Naive thymus-derived CD4-positive, alpha-beta T cell (primary cell): ENCODE measurements at regions of chr12 and their contacts with region 1.

Region 1: DNA sequence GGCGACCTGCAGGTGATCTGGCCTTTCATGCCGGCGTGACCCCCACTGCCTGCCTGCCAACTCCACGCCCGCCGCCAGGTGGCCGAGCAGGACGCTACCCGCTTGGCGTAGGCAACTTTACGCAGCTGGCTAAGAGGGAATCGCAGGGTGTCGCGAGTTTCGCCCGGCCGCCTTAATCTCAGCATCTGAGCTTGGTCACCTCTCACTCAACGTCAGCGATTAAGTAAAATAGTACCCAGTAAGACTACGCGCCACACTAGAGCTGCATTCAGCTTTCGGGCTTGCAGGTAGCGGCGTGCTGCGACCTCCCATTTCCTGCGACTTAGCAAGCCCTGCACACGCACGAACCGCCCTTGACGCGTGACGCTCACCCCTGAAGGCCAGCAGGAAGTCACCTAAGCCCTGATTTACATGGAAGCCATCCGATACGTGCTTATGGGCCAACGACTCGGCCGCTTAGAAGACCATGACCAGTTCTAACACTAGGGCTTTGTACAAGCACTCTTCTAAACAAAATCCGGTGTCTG is 33.2 kb downstream of the WBP11 start:
- DNase-seq: peak; percentile 79 to 89 (median 87)
- ATAC-seq: peak; percentile 66
- H3K4me3 ChIP-seq: peak overlapping the region; percentile 89
- H3K4me3 Mint-ChIP-seq: peak overlapping the region; percentile 91 to 100 (median 98)
- H3K27ac ChIP-seq: peak overlapping the region; percentile 96
- H3K27ac Mint-ChIP-seq: peak overlapping the region; percentile 98 to 100 (median 100)
- H3K4me1 ChIP-seq: peaks cover 11 to 28% of the 10 kb centered on the region in 2 donors
- H3K4me1 Mint-ChIP-seq: peaks cover 29 to 76% (median 57%) of the 10 kb centered on the region in 7 donors
- H3K27me3 ChIP-seq: no peaks in the 10 kb centered on the region
- H3K27me3 Mint-ChIP-seq: peaks cover 0 to 6% (median 0%) of the 10 kb centered on the region in 5 donors

Region 2: GRCh38 chr12:14239350-14239934 is 530.6 kb before region 1 on chr12:
- CTCF ChIA-PET with region 1: no interaction called
- POLR2A ChIA-PET with region 1: interaction called, 9 read pairs
- intact Hi-C with region 1: loop called in 1 of 2 experiments (anchors 2 kb)
- DNase-seq: peak in 2 of 9 donors; percentile 12 to 40
- ATAC-seq: peak; percentile 69
- H3K4me3 ChIP-seq: peak overlapping the region; percentile 52
- H3K4me3 Mint-ChIP-seq: peak overlapping the region; percentile 75 to 90 (median 82)
- H3K27ac ChIP-seq: peak overlapping the region; percentile 1
- H3K27ac Mint-ChIP-seq: peak overlapping the region; percentile 37 to 93 (median 87)
- H3K4me1 ChIP-seq: peaks cover 0 to 6% of the 10 kb centered on the region in 2 donors
- H3K4me1 Mint-ChIP-seq: peaks cover 17 to 29% (median 22%) of the 10 kb centered on the region in 7 donors
- H3K27me3 ChIP-seq: no peaks in the 10 kb centered on the region
- H3K27me3 Mint-ChIP-seq: no peaks in the 10 kb centered on the region

Region 3: DNA sequence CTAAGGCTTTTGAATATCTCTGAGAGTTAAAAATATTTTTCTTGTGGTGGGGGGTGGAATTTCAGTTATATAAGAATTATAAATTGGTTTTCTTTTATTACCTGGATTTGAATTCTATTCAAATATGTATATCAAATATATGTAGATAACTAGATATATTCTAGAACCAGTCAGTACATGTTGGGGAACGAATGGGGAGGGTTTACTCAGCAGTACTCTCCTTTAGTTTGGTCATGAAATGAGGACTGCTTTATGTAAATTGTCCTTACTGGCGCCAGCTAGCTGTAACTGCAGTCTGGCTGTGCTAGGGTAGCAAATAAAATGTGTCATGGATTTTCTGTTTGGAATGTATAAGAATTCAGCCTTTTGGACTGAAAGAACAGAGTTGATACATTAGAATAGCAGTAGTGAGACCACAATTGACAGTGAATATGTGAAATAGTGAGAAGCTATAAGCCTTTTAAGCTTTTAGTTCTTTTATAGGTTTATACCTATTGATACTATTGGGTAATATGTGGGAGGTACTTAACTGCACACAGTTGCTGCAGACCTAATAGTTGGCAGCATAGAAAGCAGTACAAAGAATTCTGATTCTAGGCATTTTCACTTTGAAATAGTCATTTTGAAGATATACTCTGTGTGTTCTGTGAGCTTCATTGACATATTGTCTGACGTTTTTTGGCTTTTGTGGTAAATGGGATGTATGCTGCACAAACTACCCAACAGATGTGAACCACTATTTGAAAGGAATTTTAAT is 375.5 kb before region 1 on chr12:
- CTCF ChIA-PET with region 1: no interaction called
- POLR2A ChIA-PET with region 1: interaction called, 4 read pairs
- intact Hi-C with region 1: loop called (anchors 5 kb)
- DNase-seq: peak in 7 of 9 donors; percentile 57 to 82 (median 71)
- ATAC-seq: peak; percentile 86
- H3K4me3 ChIP-seq: peak overlapping the region; percentile 33
- H3K4me3 Mint-ChIP-seq: peak overlapping the region; percentile 49 to 87 (median 76)
- H3K27ac ChIP-seq: peak overlapping the region; percentile 75
- H3K27ac Mint-ChIP-seq: peak overlapping the region; percentile 83 to 97 (median 95)
- H3K4me1 ChIP-seq: peaks cover 62 to 84% of the 10 kb centered on the region in 2 donors
- H3K4me1 Mint-ChIP-seq: peaks cover 47 to 99% (median 91%) of the 10 kb centered on the region in 7 donors
- H3K27me3 ChIP-seq: no peaks in the 10 kb centered on the region
- H3K27me3 Mint-ChIP-seq: no peaks in the 10 kb centered on the region

Region 4: GRCh38 chr12:14782756-14783155 is 12.7 kb after region 1 on chr12:
- CTCF ChIA-PET with region 1: interaction called, 8 read pairs
- POLR2A ChIA-PET with region 1: interaction called, 39 read pairs
- intact Hi-C with region 1: loop called in 1 of 2 experiments (anchors 1 kb)
- DNase-seq: no peak
- ATAC-seq: no peak
- H3K4me3 ChIP-seq: no peak overlapping the region
- H3K4me3 Mint-ChIP-seq: no peak overlapping the region
- H3K27ac ChIP-seq: no peak overlapping the region
- H3K27ac Mint-ChIP-seq: peak overlapping the region in 1 of 9 donors; percentile 22
- H3K4me1 ChIP-seq: no peaks in the 10 kb centered on the region
- H3K4me1 Mint-ChIP-seq: peaks cover 0 to 17% (median 4%) of the 10 kb centered on the region in 7 donors
- H3K27me3 ChIP-seq: no peaks in the 10 kb centered on the region
- H3K27me3 Mint-ChIP-seq: peaks cover 0 to 4% (median 0%) of the 10 kb centered on the region in 5 donors

Region 5: DNA sequence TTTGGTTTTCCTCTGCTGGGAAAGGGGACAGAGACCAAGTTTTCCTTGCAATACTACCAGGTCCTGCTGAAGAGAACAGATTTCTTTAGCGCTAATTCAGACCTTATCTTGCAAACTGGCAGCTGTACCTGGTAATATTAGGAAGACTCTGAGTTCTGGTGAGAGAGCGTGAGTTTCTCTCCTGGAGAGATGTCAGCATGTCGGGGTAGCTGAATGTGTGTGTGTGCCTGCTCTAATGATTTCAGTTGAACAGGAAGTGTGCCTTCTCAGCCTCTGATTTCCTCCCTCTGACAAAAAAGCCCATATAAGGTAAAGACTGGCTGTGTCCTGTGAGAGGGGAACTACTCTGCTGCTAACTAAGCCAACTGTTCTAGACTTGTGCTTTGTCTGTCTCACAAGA is 178.6 kb after region 1 on chr12:
- CTCF ChIA-PET with region 1: interaction called, 3 read pairs
- POLR2A ChIA-PET with region 1: interaction called, 23 read pairs
- intact Hi-C with region 1: loop called (anchors 1 kb)
- DNase-seq: peak in 8 of 9 donors; percentile 34 to 87 (median 81)
- ATAC-seq: peak; percentile 88
- H3K4me3 ChIP-seq: peak overlapping the region; percentile 47
- H3K4me3 Mint-ChIP-seq: peak overlapping the region; percentile 72 to 97 (median 90)
- H3K27ac ChIP-seq: peak overlapping the region; percentile 96
- H3K27ac Mint-ChIP-seq: peak overlapping the region; percentile 87 to 99 (median 97)
- H3K4me1 ChIP-seq: peaks cover 77 to 79% of the 10 kb centered on the region in 2 donors
- H3K4me1 Mint-ChIP-seq: peaks cover 69 to 95% (median 91%) of the 10 kb centered on the region in 7 donors
- H3K27me3 ChIP-seq: no peaks in the 10 kb centered on the region
- H3K27me3 Mint-ChIP-seq: no peaks in the 10 kb centered on the region

Region 6: DNA sequence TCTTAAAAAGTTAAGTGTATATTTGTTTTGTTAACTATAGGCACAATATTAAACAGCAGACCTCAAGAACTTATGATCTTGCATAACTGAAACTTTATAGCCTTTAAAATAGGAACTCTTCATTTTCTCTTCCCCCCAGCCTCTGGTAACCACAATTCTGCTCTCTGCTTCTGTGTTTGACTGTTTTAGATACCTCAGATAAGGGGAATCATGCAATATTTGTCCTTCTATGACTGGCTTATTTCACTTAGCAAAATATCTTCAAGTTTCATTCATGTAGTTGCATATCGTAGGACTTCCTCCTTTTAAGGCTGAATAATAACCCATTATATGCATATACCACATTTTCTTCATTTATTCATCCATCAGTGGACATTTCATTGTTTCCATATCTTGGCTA is 683.6 kb after region 1 on chr12:
- CTCF ChIA-PET with region 1: no interaction called
- POLR2A ChIA-PET with region 1: no interaction called
- intact Hi-C with region 1: no loop called
- DNase-seq: no peak
- ATAC-seq: no peak
- H3K4me3 ChIP-seq: no peak overlapping the region
- H3K4me3 Mint-ChIP-seq: no peak overlapping the region
- H3K27ac ChIP-seq: no peak overlapping the region
- H3K27ac Mint-ChIP-seq: peak overlapping the region in 1 of 9 donors; percentile 6
- H3K4me1 ChIP-seq: no peaks in the 10 kb centered on the region
- H3K4me1 Mint-ChIP-seq: peaks cover 0 to 6% (median 1%) of the 10 kb centered on the region in 7 donors
- H3K27me3 ChIP-seq: no peaks in the 10 kb centered on the region
- H3K27me3 Mint-ChIP-seq: peaks cover 0 to 10% (median 5%) of the 10 kb centered on the region in 5 donors

Region 7: DNA sequence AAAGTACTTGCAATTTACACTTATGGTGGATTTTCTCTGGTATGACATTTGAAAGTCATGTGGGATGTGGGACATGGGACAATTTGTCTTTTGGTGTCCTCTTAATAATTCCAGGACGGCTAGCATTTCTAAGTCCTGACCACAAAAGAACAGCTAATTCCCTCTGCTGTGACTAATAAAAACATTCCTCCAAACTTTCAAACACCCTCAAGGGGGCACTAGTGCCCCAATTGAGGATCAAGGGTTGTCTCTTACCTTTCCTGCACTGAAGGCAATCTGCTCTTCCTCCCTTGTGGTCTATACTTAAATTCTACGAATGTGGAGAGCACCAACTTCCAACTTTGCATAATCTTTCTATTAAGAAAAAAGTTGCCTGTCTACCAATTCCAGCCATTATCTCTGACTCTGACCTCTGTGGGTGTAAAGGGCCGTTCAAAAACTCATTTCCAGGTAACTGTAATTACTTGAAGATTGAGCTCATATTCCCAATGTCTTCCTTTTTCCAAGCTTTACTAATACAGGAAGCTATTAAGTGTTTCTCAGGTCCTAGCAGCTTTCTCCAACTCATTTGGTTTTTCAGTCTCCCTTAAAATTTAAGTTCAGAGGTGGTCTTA is 762.4 kb after region 1 on chr12:
- CTCF ChIA-PET with region 1: no interaction called
- POLR2A ChIA-PET with region 1: interaction called, 6 read pairs
- intact Hi-C with region 1: loop called in 1 of 2 experiments (anchors 5 kb)
- DNase-seq: peak; percentile 12 to 80 (median 69)
- ATAC-seq: peak; percentile 86
- H3K4me3 ChIP-seq: peak overlapping the region; percentile 4
- H3K4me3 Mint-ChIP-seq: peak overlapping the region in 8 of 10 donors; percentile 0 to 62 (median 40)
- H3K27ac ChIP-seq: no peak overlapping the region
- H3K27ac Mint-ChIP-seq: peak overlapping the region in 6 of 9 donors; percentile 28 to 92 (median 80)
- H3K4me1 ChIP-seq: peaks cover 0 to 33% of the 10 kb centered on the region in 2 donors
- H3K4me1 Mint-ChIP-seq: peaks cover 0 to 13% (median under 1%) of the 10 kb centered on the region in 7 donors
- H3K27me3 ChIP-seq: no peaks in the 10 kb centered on the region
- H3K27me3 Mint-ChIP-seq: peaks cover 0 to 24% (median 0%) of the 10 kb centered on the region in 5 donors